K562 (cell line): ENCODE measurements at regions of chr1 and their contacts with region 1.

Region 1: GRCh38 chr1:56502700-56503245 is 76.6 kb downstream of the PLPP3 start:
- DNase-seq: peak; percentile 62 to 76 (median 64)
- ATAC-seq: peak; percentile 96
- H3K4me3 ChIP-seq: no peak overlapping the region
- H3K27ac ChIP-seq: peak overlapping the region; percentile 79
- H3K4me1 ChIP-seq: peaks cover 4 to 38% of the 10 kb centered on the region in 2 experiments; a peak in 4 of 5 replicates
- H3K27me3 ChIP-seq: no peaks in the 10 kb centered on the region
- CTCF ChIP-seq: no peak
- EP300 ChIP-seq: peak; percentile 28; the same call in 1 of the 2 replicates
- POLR2A ChIP-seq: no peak; the same call in 1 of the 2 replicates
- RAD21 ChIP-seq: no peak

Region 2: GRCh38 chr1:56477164-56478111 is 25.3 kb before region 1 on chr1:
- CTCF ChIA-PET with region 1: no interaction called
- POLR2A ChIA-PET with region 1: no interaction called
- in situ Hi-C with region 1: no loop called
- intact Hi-C with region 1: no loop called
- DNase-seq: no peak
- ATAC-seq: peak; percentile 45; the same call in 2 of the 3 replicates
- H3K4me3 ChIP-seq: no peak overlapping the region
- H3K27ac ChIP-seq: no peak overlapping the region
- H3K4me1 ChIP-seq: peaks cover 0 to 8% of the 10 kb centered on the region in 2 experiments; a peak in 1 of 5 replicates
- H3K27me3 ChIP-seq: peaks cover 22 to 49% of the 10 kb centered on the region in 2 experiments
- CTCF ChIP-seq: no peak
- EP300 ChIP-seq: no peak
- POLR2A ChIP-seq: no peak
- RAD21 ChIP-seq: no peak

Region 3: GRCh38 chr1:56516539-56517252 is 13.9 kb after region 1 on chr1:
- CTCF ChIA-PET with region 1: no interaction called
- POLR2A ChIA-PET with region 1: interaction called, 12 read pairs
- in situ Hi-C with region 1: no loop called
- intact Hi-C with region 1: loop called (anchors 2 kb)
- DNase-seq: peak; percentile 42 to 79 (median 60)
- ATAC-seq: peak; percentile 94
- H3K4me3 ChIP-seq: peak overlapping the region; percentile 17; the same call in 1 of the 2 replicates
- H3K27ac ChIP-seq: peak overlapping the region; percentile 86
- H3K4me1 ChIP-seq: peaks cover 11 to 37% of the 10 kb centered on the region in 2 experiments; a peak in 4 of 5 replicates
- H3K27me3 ChIP-seq: no peaks in the 10 kb centered on the region
- CTCF ChIP-seq: no peak
- EP300 ChIP-seq: peak; percentile 71
- POLR2A ChIP-seq: peak; percentile 65; the same call in 1 of the 2 replicates
- RAD21 ChIP-seq: no peak